CD4-positive, alpha-beta T cell (primary cell): ENCODE measurements at regions of chr7 and their contacts with region 1.

Region 1: GRCh38 chr7:20816372-20816959 is 29.8 kb upstream of the SP8 start:
- DNase-seq: no peak
- ATAC-seq: no peak
- H3K4me3 ChIP-seq: no peak overlapping the region
- H3K4me3 Mint-ChIP-seq: no peak overlapping the region
- H3K27ac ChIP-seq: no peak overlapping the region
- H3K27ac Mint-ChIP-seq: no peak overlapping the region
- H3K4me1 ChIP-seq: no peaks in the 10 kb centered on the region
- H3K4me1 Mint-ChIP-seq: no peaks in the 10 kb centered on the region
- H3K27me3 ChIP-seq: no peaks in the 10 kb centered on the region
- H3K27me3 Mint-ChIP-seq: no peaks in the 10 kb centered on the region
- CTCF ChIP-seq: no peak

Region 2: DNA sequence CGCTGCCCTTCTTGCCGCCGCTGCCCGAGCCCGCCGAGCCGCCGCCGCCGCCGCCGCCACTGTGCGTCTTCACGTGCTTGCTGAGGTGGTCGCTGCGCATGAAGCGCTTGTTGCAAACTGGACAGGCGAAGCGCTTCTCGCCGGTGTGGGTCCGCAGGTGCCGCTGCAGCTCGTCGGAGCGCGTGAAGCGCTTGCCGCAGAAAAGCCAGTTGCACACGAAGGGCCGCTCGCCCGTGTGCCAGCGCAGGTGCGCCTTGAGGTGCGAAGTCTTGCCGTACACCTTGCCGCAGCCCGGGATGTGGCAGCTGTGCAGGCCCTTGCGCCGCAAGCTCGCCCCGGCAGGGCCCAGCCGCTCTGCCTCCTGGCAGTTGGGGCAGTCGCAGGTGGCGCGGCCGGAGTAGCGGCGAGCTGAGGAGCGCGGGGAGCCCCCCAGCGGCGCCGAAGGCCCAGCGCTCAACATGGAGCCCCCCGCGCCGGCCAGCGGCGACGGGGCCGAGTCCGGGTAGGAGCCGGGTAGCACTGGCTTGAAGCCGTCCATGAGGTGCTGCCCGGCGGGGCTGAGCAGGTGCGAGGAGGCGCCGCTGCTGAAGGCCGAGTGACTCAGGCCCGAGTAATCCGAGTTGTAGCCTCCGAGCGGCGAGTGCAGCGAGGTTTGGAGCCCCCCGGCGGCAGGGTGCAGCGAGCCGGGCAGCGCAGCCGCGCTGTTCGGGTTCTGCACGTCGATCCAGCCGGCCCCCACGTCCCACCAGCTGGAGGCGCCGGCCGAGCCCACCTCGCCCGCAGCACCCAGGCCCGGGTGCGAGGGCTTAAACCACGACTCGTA is 31.9 kb before region 1 on chr7:
- CTCF ChIA-PET with region 1: no interaction called
- POLR2A ChIA-PET with region 1: no interaction called
- intact Hi-C with region 1: no loop called
- DNase-seq: peak in 1 of 14 experiments; percentile 16
- ATAC-seq: no peak
- H3K4me3 ChIP-seq: no peak overlapping the region
- H3K4me3 Mint-ChIP-seq: no peak overlapping the region
- H3K27ac ChIP-seq: no peak overlapping the region
- H3K27ac Mint-ChIP-seq: no peak overlapping the region
- H3K4me1 ChIP-seq: peaks cover 33% of the 10 kb centered on the region
- H3K4me1 Mint-ChIP-seq: peaks cover 28% of the 10 kb centered on the region
- H3K27me3 ChIP-seq: peaks cover 55 to 92% of the 10 kb centered on the region in 2 experiments
- H3K27me3 Mint-ChIP-seq: peaks cover 88% of the 10 kb centered on the region
- CTCF ChIP-seq: no peak

Region 3: GRCh38 chr7:20796500-20796899 is 20.0 kb before region 1 on chr7:
- CTCF ChIA-PET with region 1: no interaction called
- POLR2A ChIA-PET with region 1: no interaction called
- intact Hi-C with region 1: loop called in 1 of 2 experiments (anchors 1 kb)
- DNase-seq: no peak
- ATAC-seq: no peak
- H3K4me3 ChIP-seq: no peak overlapping the region
- H3K4me3 Mint-ChIP-seq: peak overlapping the region; percentile 42
- H3K27ac ChIP-seq: no peak overlapping the region
- H3K27ac Mint-ChIP-seq: no peak overlapping the region
- H3K4me1 ChIP-seq: peaks cover 15% of the 10 kb centered on the region
- H3K4me1 Mint-ChIP-seq: peaks cover 18% of the 10 kb centered on the region
- H3K27me3 ChIP-seq: peaks cover 55 to 92% of the 10 kb centered on the region in 2 experiments
- H3K27me3 Mint-ChIP-seq: peaks cover 87% of the 10 kb centered on the region
- CTCF ChIP-seq: no peak

Region 4: GRCh38 chr7:20828947-20829346 is 12.5 kb after region 1 on chr7:
- CTCF ChIA-PET with region 1: no interaction called
- POLR2A ChIA-PET with region 1: no interaction called
- intact Hi-C with region 1: no loop called
- DNase-seq: no peak
- ATAC-seq: no peak
- H3K4me3 ChIP-seq: no peak overlapping the region
- H3K4me3 Mint-ChIP-seq: no peak overlapping the region
- H3K27ac ChIP-seq: no peak overlapping the region
- H3K27ac Mint-ChIP-seq: no peak overlapping the region
- H3K4me1 ChIP-seq: no peaks in the 10 kb centered on the region
- H3K4me1 Mint-ChIP-seq: no peaks in the 10 kb centered on the region
- H3K27me3 ChIP-seq: no peaks in the 10 kb centered on the region
- H3K27me3 Mint-ChIP-seq: peaks cover 23% of the 10 kb centered on the region
- CTCF ChIP-seq: no peak

Region 5: GRCh38 chr7:20839198-20839735 is 22.8 kb after region 1 on chr7:
- CTCF ChIA-PET with region 1: no interaction called
- POLR2A ChIA-PET with region 1: no interaction called
- intact Hi-C with region 1: no loop called
- DNase-seq: no peak
- ATAC-seq: no peak
- H3K4me3 ChIP-seq: no peak overlapping the region
- H3K4me3 Mint-ChIP-seq: no peak overlapping the region
- H3K27ac ChIP-seq: no peak overlapping the region
- H3K27ac Mint-ChIP-seq: no peak overlapping the region
- H3K4me1 ChIP-seq: no peaks in the 10 kb centered on the region
- H3K4me1 Mint-ChIP-seq: no peaks in the 10 kb centered on the region
- H3K27me3 ChIP-seq: no peaks in the 10 kb centered on the region
- H3K27me3 Mint-ChIP-seq: no peaks in the 10 kb centered on the region
- CTCF ChIP-seq: no peak

Region 6: DNA sequence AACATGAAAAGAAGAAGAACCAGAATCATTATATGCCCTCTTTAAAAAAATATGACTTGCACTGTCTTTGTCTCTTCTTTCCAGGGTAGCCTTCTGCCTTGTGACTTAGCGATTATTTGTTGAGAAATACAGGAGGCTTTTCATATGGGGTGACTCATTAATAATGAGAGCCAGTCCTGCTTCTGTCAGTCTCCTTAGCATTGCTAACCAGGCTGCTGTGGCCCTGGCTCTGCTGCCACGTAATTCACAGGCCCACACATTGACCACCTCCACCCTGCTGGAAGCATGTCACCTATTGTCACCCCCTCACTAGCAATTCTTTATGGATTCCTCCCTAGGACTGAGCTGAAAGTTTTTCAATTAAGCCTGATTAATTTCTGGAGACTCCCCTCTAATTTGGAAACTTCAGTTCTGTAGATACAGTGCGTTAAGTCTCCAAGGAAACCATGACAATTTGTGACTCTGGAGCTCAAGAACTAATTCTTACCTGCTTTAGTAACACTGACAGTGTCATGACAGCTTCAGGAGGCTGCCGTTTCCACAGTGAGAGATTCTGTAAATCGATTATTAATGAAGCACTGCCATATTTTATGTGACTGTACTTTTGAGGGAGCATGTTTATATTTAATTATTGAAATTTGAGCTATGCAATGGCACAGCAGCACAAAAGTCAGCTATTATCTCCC is 238.1 kb after region 1 on chr7:
- CTCF ChIA-PET with region 1: no interaction called
- POLR2A ChIA-PET with region 1: no interaction called
- intact Hi-C with region 1: no loop called
- DNase-seq: no peak
- ATAC-seq: no peak
- H3K4me3 ChIP-seq: no peak overlapping the region
- H3K4me3 Mint-ChIP-seq: no peak overlapping the region
- H3K27ac ChIP-seq: no peak overlapping the region
- H3K27ac Mint-ChIP-seq: no peak overlapping the region
- H3K4me1 ChIP-seq: no peaks in the 10 kb centered on the region
- H3K4me1 Mint-ChIP-seq: no peaks in the 10 kb centered on the region
- H3K27me3 ChIP-seq: no peaks in the 10 kb centered on the region
- H3K27me3 Mint-ChIP-seq: peaks cover 8% of the 10 kb centered on the region
- CTCF ChIP-seq: no peak